ENCODE measurements at regions of chr17 and their contacts with region 1.

Region 1: DNA sequence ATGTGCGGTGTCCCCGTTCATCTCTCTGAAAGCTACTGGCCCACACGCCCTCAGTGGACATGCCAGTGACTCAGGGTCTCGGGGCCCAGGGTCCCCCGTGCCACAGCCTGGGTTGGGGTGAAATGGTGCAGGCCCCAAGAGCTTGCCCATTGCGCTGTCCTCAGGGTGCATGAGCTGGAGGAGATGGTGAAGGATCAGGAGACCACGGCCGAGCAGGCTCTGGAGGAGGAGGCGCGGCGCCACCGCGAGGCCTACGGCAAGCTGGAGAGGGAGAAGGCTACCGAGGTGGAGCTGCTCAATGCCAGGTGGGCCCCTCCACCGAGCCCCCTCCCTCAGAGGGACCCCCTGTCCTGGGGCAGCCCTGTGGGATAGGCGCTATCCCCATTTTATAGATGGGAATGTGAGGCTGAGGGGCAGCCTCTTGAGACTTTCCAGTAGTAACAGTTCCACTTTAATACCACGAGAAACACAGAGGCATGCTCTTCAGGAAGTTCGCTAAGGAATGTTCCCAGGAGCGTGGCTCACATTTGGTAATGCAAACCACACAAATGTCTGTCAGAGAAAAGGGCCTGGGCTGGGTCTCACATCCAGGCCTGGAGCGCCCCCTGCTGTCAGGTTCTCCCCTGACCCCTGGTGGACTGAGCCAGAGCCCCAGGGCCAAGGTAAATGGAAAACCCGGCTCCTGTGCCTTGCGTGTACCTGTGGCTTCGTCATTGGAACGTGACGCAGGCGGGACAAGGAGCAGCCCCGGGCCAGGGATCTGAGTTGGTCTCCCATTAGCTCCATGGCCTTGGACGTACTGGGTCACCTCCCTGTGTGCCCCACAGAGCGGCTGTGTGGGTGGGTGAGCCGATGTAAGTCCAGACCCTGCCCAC is 133.7 kb downstream of the RAB11FIP4 start:
- DNase-seq: peak; percentile 87
- H3K4me3 ChIP-seq: no peak overlapping the region
- H3K27ac ChIP-seq: no peak overlapping the region
- H3K4me1 ChIP-seq: no peaks in the 10 kb centered on the region
- H3K27me3 ChIP-seq: no peaks in the 10 kb centered on the region
- CTCF ChIP-seq: peak; percentile 90

Region 2: DNA sequence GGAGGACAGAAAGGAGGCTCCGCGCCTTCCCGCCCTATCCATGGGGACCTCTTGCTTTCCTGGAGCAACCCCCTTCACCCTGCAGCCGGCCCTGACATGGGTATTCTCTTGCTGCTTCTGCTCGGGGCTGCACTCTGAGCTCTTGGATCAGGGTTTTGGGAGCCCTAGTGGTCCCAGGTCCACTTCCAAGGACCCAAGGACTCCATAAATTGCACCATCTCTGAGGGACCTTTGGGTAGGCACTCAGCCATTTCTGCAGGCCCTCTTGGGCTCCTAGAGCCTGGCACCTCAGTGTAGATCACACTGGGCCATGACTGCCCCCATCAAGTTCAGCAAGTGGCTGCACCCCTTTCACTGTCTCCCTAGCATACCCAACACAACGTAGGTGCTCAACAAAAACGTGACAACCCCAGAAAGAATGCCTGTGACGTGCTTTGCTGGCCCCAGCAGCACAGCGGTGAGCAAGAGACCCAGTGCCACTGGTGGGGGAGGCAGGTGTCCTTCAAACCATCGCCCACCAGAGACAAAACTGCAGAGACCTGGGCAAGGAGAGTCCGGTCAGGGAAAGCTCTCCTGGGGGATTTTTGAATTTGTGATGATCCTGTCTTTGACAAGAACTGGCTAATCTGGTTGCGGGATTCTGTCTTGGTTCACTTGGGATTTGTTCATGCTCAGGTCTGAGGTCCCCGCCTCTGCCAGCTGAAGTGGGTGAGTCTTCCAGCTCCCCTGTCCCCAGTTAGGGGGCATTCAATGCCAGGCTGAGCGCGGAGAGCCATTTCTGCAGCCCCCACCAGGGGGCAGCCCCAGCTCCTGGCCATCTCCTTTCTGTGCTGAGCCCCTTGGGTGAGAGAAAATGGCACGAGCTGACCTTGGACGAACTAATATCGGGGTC is 136.1 kb before region 1 on chr17:
- intact Hi-C with region 1: loop called (anchors 5 kb)
- DNase-seq: no peak
- H3K4me3 ChIP-seq: no peak overlapping the region
- H3K27ac ChIP-seq: no peak overlapping the region
- H3K4me1 ChIP-seq: no peaks in the 10 kb centered on the region
- H3K27me3 ChIP-seq: peaks cover 33% of the 10 kb centered on the region
- CTCF ChIP-seq: peak; percentile 47

Region 3: DNA sequence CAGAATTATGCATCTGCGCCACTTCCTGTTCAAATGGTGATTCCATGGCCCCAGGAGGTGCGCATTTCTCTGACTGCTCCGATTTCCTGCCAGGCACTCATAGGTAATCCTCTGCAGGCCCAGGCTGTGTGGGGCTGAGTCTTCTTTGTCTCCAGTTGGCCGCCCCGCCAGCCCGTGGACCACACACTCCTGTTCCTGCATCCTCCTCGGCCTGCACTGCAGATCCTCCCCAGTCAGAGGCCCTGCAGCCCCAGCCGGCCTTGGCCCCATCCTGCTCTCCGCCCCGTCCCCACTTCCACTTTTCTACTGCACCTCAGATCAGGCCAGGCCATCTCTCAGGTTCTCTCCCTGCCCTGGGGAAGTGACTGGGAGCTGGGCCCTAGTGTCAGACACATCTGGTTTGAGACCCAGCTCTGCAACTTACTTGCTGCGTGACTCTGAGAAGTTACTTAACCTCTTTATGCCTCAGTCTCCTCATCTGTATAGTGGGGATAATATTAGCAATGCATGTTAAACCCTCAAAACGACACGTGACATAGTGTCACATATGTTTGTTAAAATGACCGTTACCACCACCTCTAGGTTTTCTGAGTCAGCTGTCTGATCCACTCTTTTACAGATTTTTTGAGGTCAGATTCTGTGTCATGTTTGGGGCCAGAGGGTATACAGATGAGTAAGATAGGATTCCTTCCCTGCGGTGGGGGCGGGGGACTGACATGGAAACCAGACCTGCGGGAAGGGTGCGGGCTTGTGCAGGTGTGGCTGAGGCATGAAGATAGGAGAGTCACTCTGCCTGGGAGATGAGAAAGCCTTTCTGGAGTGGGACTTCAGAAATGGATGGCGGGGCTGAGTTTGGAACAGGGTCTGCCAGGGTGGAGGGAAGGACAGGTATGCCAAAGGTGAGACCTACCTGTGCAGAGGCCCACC is 120.9 kb before region 1 on chr17:
- intact Hi-C with region 1: no loop called
- DNase-seq: no peak
- H3K4me3 ChIP-seq: no peak overlapping the region
- H3K27ac ChIP-seq: no peak overlapping the region
- H3K4me1 ChIP-seq: no peaks in the 10 kb centered on the region
- H3K27me3 ChIP-seq: no peaks in the 10 kb centered on the region
- CTCF ChIP-seq: no peak

Measured in colonic mucosa (tissue), 4 donors.